AG04450 (cell line): ENCODE measurements at regions of chr1 and their contacts with region 1.

Region 1: GRCh38 chr1:24201941-24202440 is 14.9 kb upstream of the IFNLR1 start:
- DNase-seq: peak; percentile 69
- H3K4me3 ChIP-seq: no peak overlapping the region
- H3K27ac ChIP-seq: no peak overlapping the region
- H3K27me3 ChIP-seq: peaks cover 8% of the 10 kb centered on the region
- CTCF ChIP-seq: peak; percentile 88

Region 2: GRCh38 chr1:24055681-24056080 is 146.3 kb before region 1 on chr1:
- CTCF ChIA-PET with region 1: no interaction called
- POLR2A ChIA-PET with region 1: no interaction called
- DNase-seq: no peak
- H3K4me3 ChIP-seq: no peak overlapping the region
- H3K27ac ChIP-seq: no peak overlapping the region
- H3K27me3 ChIP-seq: peaks cover 6% of the 10 kb centered on the region
- CTCF ChIP-seq: no peak

Region 3: DNA sequence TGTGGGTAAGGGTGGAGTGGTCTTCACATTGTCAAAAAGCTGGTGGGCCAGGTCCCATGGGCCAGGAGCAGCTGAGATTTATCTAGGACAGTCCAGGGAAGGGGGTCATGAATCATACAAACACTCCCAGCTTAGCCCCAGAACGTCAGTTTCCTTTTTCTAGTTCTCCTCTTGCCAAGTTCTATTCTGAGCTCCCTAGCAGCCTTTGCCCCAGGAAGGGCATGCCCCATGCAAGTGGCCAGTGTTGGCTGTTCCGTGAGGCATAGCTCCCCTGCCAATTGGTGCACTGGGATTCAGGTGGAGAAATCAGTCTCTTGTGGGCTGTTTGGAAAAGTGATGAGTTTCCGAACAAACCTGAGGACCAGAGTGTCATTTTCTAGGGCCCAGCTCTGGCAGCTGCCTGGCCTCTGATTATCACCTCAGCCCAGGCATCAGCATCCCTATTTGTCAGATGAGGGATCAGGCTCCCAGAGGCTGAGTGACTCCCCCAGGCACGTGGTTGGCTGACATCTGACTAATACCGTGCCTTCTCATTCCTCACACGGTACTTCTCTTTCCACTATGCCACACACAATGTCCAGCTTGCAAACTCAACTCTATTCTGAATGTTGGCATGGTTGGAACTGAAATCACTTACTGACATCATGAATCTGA is 75.8 kb before region 1 on chr1:
- CTCF ChIA-PET with region 1: no interaction called
- POLR2A ChIA-PET with region 1: no interaction called
- DNase-seq: no peak
- H3K4me3 ChIP-seq: no peak overlapping the region
- H3K27ac ChIP-seq: no peak overlapping the region
- H3K27me3 ChIP-seq: peaks cover 11% of the 10 kb centered on the region
- CTCF ChIP-seq: no peak

Region 4: GRCh38 chr1:24150234-24151174 is 51.5 kb before region 1 on chr1:
- CTCF ChIA-PET with region 1: interaction called, 31 read pairs
- POLR2A ChIA-PET with region 1: no interaction called
- DNase-seq: peak; percentile 21
- H3K4me3 ChIP-seq: 0 out of 2 replicates have a peak overlapping the region, but pooled peaks have one; percentile 18
- H3K27ac ChIP-seq: no peak overlapping the region
- H3K27me3 ChIP-seq: peaks cover 40% of the 10 kb centered on the region
- CTCF ChIP-seq: peak; percentile 76

Region 5: GRCh38 chr1:24308365-24309015 is 106.5 kb after region 1 on chr1:
- CTCF ChIA-PET with region 1: interaction called, 16 read pairs
- POLR2A ChIA-PET with region 1: no interaction called
- DNase-seq: no peak
- H3K4me3 ChIP-seq: no peak overlapping the region
- H3K27ac ChIP-seq: no peak overlapping the region
- H3K27me3 ChIP-seq: peaks cover 7% of the 10 kb centered on the region
- CTCF ChIP-seq: peak; percentile 53

Region 6: GRCh38 chr1:24364975-24365678 is 163.1 kb after region 1 on chr1:
- CTCF ChIA-PET with region 1: interaction called, 30 read pairs
- POLR2A ChIA-PET with region 1: no interaction called
- DNase-seq: peak; percentile 63
- H3K4me3 ChIP-seq: no peak overlapping the region
- H3K27ac ChIP-seq: peak overlapping the region; percentile 31
- H3K27me3 ChIP-seq: no peaks in the 10 kb centered on the region
- CTCF ChIP-seq: no peak

Region 7: DNA sequence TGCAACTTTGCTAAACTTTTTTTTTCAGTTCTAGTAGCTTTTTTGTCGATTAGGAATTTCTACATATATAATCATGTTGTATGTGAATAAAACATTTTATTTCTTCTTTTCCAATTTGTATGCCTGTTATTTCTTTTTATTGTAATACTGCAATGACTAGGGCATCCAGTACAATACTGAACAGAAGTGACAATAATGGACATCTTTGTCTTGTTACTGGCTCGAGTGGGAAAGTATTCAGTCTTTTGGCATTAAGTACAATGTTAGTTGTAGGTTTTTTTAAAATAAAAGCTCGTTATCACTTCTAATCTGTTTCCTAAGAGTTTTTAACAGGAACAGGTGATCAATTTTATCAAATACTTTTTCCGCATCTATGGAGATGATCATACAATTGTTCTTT is 201.8 kb after region 1 on chr1:
- CTCF ChIA-PET with region 1: interaction called, 21 read pairs
- POLR2A ChIA-PET with region 1: no interaction called
- DNase-seq: no peak
- H3K4me3 ChIP-seq: no peak overlapping the region
- H3K27ac ChIP-seq: no peak overlapping the region
- H3K27me3 ChIP-seq: no peaks in the 10 kb centered on the region
- CTCF ChIP-seq: no peak

Region 8: GRCh38 chr1:24526940-24527542 is 325.1 kb after region 1 on chr1:
- CTCF ChIA-PET with region 1: interaction called, 24 read pairs
- POLR2A ChIA-PET with region 1: no interaction called
- DNase-seq: no peak
- H3K4me3 ChIP-seq: no peak overlapping the region
- H3K27ac ChIP-seq: no peak overlapping the region
- H3K27me3 ChIP-seq: no peaks in the 10 kb centered on the region
- CTCF ChIP-seq: peak; percentile 60

Region 9: DNA sequence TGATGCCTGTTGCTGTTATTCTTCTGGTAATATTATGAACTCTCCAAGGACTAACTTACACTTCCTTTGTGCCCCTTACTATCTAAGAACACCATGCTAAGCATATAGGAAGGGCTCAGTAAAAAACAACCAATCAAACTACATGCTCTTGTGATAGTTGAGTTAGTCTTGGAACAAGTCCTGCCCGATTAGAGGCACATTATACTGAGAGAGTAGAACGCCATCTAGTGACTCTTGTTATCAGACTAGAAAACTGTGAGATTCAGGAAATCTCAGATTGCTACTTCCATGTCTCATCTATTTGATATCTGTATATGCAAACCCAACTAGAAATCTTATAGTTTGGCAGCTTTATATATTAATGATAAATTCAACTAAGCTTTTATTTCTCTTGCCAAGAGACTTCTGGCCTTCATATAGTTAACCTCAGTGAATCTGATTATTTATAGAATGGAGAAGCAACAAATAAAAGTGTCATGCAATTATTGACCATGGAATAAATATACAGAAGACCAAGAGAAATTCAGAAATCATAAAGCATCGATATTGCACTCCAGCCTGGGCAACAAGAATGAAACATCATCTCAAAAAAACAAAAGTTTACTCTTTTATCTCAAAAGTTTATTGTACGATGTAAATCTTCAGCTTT is 433.3 kb after region 1 on chr1:
- CTCF ChIA-PET with region 1: interaction called, 121 read pairs
- POLR2A ChIA-PET with region 1: no interaction called
- DNase-seq: peak; percentile 41
- H3K4me3 ChIP-seq: no peak overlapping the region
- H3K27ac ChIP-seq: no peak overlapping the region
- H3K27me3 ChIP-seq: peaks cover 10% of the 10 kb centered on the region
- CTCF ChIP-seq: peak; percentile 69